Posterior cingulate gyrus (tissue), 11 donors: ENCODE measurements at regions of chr1 and their contacts with region 1.

Region 1: DNA sequence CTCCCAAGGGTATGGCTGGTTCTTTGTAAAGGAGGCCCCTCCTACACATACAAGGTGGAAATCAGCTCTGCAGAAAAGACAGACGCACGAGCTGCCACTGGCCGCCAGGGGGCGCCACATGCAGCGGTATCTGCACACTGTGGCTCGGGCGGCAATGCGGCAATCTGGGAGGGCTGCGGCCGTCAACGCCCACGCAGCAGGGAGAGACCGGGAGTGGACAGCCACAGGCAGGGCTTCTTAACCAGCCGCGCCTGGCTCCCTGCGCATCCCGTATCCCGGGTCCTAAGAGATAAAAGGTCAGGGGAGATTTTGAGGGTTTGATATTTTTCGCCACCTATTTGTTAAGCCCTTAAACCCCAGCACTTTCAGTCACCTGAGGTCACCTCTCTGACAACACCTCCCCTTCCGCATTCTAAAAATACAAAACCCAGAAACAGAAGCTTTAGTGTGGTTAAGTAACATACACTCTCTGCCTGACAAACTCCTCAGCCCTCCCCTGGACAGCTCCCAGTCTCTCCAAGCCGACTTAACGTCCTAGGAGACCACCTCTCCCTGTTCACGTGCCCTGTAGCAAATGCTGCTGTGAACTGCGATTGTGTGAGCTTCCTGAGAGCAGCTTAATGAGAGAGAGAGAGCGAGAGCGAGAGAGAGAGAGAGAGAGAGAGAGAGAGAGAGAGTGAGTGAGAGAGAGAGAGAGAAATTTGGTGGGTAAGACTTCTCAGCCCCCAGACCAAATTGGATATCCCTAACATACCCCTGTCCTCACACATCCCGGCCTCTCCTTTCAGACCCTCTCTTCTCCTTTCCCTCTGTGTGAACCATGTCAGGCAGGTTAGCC is 13.5 kb upstream of the KCNA2 start:
- DNase-seq: peak; percentile 74 to 98 (median 88)

Region 2: GRCh38 chr1:110524311-110525251 is 95.0 kb before region 1 on chr1:
- intact Hi-C with region 1: loop called (anchors 1 kb)
- DNase-seq: peak; percentile 39 to 95 (median 70)

Region 3: DNA sequence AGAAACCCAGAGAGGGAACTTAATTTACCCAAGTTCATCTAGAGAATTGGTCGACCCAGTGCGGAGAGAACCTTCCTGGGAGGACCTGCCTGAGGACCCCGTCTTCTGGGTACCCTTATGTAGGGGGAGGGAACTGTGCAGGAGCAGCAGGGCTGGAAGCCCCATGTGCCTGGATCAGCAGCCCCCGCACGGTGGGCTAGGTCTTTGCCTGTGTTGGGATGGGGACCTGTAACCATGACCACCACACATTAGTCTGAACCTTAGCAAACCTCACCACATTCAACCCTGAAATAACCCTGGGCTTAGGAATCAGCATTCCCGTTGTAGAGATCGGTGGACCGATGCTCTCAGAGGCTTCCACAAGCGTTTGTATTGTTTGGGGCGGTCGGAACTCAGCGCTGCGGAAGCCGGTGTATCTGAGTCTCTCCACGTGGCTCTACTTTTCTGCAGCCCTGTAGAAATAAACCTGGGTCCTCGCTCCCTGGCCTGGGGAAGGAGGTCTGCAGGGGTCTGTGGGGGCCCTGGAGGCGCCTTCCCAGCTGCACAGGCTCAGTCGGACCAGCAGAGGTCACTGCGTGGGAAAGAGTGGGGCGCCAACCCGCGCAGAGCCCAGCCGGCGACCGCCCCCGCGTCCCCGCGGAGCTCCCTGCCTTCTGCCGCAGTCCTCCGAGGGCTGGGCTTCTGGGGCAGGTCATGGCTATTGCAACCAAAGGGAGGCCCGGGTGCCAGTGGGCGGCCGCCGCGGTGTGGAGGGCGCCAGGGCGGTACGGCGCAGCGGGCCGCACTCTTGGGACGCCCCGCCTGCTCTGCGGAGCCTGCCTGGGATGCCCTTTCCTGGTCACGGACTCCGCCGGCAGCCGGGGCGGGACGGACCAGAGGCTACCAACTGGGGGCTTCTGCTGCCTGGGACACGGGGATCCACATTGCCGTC is 64.5 kb before region 1 on chr1:
- intact Hi-C with region 1: loop called (anchors 1 kb)
- DNase-seq: peak; percentile 63 to 96 (median 76)

Region 4: GRCh38 chr1:110726755-110727154 is 107.1 kb after region 1 on chr1:
- intact Hi-C with region 1: no loop called
- DNase-seq: no peak

Region 5: DNA sequence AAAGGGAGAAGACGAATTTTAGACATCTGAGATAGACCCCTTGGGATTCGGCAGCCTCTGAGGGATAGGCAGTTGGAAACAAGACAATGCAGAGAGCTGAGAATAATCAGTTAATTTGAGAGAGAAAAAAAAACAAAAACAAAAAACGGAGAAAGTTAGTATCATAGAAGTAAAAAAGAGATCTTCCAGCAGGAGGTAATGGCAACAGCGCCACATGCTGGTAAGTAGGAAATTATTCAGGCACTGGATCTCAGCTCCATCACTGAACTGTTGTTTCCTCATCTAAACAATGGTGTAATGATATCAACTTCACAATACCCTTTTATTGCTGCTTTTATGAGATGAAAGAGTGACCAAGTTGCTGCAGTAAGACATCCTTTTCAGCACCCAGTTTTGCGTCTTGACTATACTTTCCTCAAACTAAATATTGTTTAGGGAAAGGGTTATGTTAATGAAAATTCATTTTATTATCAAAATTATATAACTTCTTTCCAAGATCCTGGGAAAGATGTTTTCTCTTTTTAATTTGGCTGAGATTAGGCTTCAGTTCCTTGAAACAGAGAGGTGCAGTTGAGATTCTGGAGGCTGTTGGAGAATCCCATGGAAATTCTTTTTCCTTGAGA is 146.5 kb after region 1 on chr1:
- intact Hi-C with region 1: loop called (anchors 5 kb)
- DNase-seq: peak in 5 of 10 donors; percentile 41 to 84 (median 50)

Region 6: DNA sequence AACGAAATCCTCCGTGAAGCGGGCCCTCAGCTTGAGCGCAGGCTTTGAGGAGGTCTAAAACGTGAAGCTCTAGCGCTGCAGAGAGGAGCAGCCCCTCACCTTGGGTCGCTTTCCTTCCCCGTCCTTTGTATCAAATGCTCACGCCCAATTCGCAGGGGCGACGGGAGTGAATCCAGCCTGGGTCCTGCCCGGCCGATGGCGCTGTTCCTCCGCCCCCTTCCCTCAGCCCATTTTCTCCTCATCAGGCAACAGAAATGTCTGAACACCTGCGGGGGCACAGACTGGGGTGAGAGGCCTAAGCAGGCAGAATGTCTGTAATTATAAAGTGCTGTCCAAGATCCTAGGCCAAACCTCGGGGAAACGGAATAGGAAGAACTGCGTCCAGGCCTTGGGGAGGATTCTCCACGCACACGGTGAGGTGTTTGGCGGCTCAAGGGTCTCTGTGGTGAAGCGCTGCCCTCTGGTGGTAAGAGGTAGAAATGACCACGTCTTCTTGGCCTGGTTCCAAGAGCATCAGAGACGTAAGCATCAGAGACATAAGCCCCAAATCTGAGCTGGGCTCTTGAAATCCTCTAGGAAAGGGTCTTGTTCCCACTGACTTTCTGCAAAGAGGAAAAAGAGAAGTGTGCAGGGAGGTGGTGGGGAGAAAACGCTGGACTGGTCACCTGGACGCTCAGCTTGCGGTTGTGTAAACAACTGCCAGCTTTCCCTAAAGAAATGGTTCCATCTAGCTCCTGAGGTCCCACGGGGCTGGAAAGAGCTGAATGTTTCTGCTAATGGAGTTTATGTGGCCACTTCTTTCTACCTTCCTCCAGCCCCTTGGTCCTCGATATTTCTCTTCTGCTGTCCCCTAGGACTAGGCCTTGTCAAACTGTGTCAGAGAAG is 161.2 kb after region 1 on chr1:
- intact Hi-C with region 1: loop called (anchors 5 kb)
- DNase-seq: peak; percentile 30 to 94 (median 66)